WTC11 (cell line): ENCODE measurements at regions of chr21 and their contacts with region 1.

Region 1: GRCh38 chr21:26148079-26148839 is 22.3 kb downstream of the APP start:
- DNase-seq: peak; percentile 61
- ATAC-seq: peak; percentile 92
- H3K4me3 Mint-ChIP-seq: no peak overlapping the region; the same call in 1 of the 2 replicates
- H3K27ac Mint-ChIP-seq: peak overlapping the region; percentile 91
- H3K4me1 Mint-ChIP-seq: peaks cover 76% of the 10 kb centered on the region
- H3K27me3 Mint-ChIP-seq: no peaks in the 10 kb centered on the region
- CTCF ChIP-seq: no peak

Region 2: GRCh38 chr21:26170471-26171257 is 22.4 kb after region 1 on chr21 and contains the start of gene APP:
- CTCF ChIA-PET with region 1: interaction called, 18 read pairs
- POLR2A ChIA-PET with region 1: interaction called, 6 read pairs
- DNase-seq: peak; percentile 85
- ATAC-seq: peak; percentile 62
- H3K4me3 Mint-ChIP-seq: peak within 1 kb of the TSS; percentile 93
- H3K27ac Mint-ChIP-seq: no peak within 1 kb of the TSS; the same call in 1 of the 2 replicates
- H3K4me1 Mint-ChIP-seq: peaks cover 59% of the 10 kb centered on the region
- H3K27me3 Mint-ChIP-seq: no peaks in the 10 kb centered on the region; the same call in 1 of the 2 replicates
- CTCF ChIP-seq: peak; percentile 97
- total RNA-seq, gene APP: 560 to 657 TPM (median 656 TPM) in 3 replicates

Region 3: GRCh38 chr21:26224351-26224750 is 76.1 kb after region 1 on chr21:
- CTCF ChIA-PET with region 1: no interaction called
- POLR2A ChIA-PET with region 1: no interaction called
- DNase-seq: no peak
- ATAC-seq: no peak
- H3K4me3 Mint-ChIP-seq: no peak overlapping the region
- H3K27ac Mint-ChIP-seq: no peak overlapping the region
- H3K4me1 Mint-ChIP-seq: peaks cover 8% of the 10 kb centered on the region; the same call in 1 of the 2 replicates
- H3K27me3 Mint-ChIP-seq: no peaks in the 10 kb centered on the region; the same call in 1 of the 2 replicates
- CTCF ChIP-seq: no peak